Dendritic cell treated with granulocyte-macrophage colony-stimulating factor and Interleukin-4, amounts not matched to agents 40 ng/mL and 50 ng/mL, for 4 days (primary cell): ENCODE measurements at regions of chr1 and their contacts with region 1.

Region 1: GRCh38 chr1:56216218-56216617 is 363.1 kb downstream of the PLPP3 start:
- H3K4me3 Mint-ChIP-seq: no peak overlapping the region
- H3K27ac Mint-ChIP-seq: no peak overlapping the region
- H3K4me1 Mint-ChIP-seq: peaks cover 10% of the 10 kb centered on the region
- H3K27me3 Mint-ChIP-seq: peaks cover 3% of the 10 kb centered on the region

Region 2: DNA sequence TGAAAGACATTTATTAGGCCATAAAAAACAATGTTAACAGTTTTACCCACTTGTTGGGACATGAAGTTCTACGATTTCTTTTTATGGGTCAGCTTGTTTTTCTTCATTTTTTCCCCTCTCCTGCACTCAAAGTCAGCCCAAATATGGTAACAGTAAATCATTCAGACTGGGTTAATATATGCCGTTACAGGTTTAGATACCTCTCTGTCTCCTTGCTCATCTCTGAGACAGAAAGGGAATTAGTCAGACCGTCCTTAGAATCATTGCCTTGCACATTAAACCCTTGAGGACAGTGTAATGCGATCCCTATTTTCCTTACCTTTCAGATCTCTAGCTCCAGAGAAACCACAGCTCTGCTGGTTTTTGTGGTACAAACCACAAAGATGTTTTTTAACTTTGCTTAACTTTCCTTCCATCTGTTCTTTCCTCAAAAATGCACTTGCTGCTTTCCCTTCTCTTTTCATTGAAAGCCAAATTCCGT is 250.2 kb before region 1 on chr1:
- intact Hi-C with region 1: no loop called
- H3K4me3 Mint-ChIP-seq: no peak overlapping the region
- H3K27ac Mint-ChIP-seq: no peak overlapping the region
- H3K4me1 Mint-ChIP-seq: peaks cover 17% of the 10 kb centered on the region
- H3K27me3 Mint-ChIP-seq: peaks cover 26% of the 10 kb centered on the region

Region 3: GRCh38 chr1:56156971-56157876 is 59.0 kb before region 1 on chr1:
- intact Hi-C with region 1: loop called (anchors 10 kb)
- H3K4me3 Mint-ChIP-seq: no peak overlapping the region
- H3K27ac Mint-ChIP-seq: no peak overlapping the region
- H3K4me1 Mint-ChIP-seq: no peaks in the 10 kb centered on the region
- H3K27me3 Mint-ChIP-seq: peaks cover 21% of the 10 kb centered on the region